Heart left ventricle (tissue), 16 donors: ENCODE measurements at regions of chr11 and their contacts with region 1.

Region 1: DNA sequence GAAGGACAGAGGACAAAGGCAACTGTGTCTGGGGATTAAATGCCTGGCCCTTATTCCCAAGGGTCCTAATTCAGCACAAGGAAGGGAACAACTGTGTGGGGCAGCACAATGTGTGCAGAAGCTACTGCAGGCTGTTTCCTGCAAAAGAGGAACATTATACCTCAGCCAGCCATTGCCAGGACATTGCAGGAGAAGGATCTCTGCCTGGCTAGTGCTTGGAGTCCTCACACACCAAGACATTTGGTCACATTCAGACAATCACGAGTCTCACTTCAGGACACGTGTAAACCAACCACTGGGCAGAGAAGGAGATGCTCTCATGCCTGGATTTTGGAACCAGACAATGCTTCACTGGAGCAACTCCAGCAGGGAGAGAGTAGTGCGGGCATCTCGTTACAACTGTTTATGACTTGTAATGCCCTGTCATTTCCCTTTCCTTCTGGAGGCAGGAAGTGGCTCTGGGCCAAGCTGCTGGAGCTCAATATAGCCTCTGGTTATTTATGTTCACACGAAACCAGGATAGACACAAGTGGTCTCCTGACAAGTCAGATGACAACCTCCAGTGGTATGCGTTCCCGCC is 23.9 kb upstream of the ZC3H12C start:
- DNase-seq: peak; percentile 65 to 81 (median 77)
- ATAC-seq: peak; percentile 78 to 92 (median 88)
- H3K4me3 ChIP-seq: peak overlapping the region in 3 of 12 donors; percentile 12 to 15 (median 13)
- H3K27ac ChIP-seq: peak overlapping the region in 9 of 12 donors; percentile 9 to 71 (median 49)
- H3K4me1 ChIP-seq: peaks cover 0 to 26% (median 16%) of the 10 kb centered on the region in 12 donors
- H3K27me3 ChIP-seq: no peaks in the 10 kb centered on the region
- CTCF ChIP-seq: no peak
- POLR2A ChIP-seq: no peak

Region 2: GRCh38 chr11:109208121-109208520 is 861.1 kb before region 1 on chr11:
- intact Hi-C with region 1: no loop called
- DNase-seq: no peak
- ATAC-seq: no peak
- H3K4me3 ChIP-seq: no peak overlapping the region
- H3K27ac ChIP-seq: no peak overlapping the region
- H3K4me1 ChIP-seq: no peaks in the 10 kb centered on the region
- H3K27me3 ChIP-seq: no peaks in the 10 kb centered on the region
- CTCF ChIP-seq: no peak
- POLR2A ChIP-seq: no peak

Region 3: GRCh38 chr11:109658190-109658589 is 411.1 kb before region 1 on chr11:
- intact Hi-C with region 1: no loop called
- DNase-seq: no peak
- ATAC-seq: peak; percentile 42 to 73 (median 46)
- H3K4me3 ChIP-seq: no peak overlapping the region
- H3K27ac ChIP-seq: no peak overlapping the region
- H3K4me1 ChIP-seq: no peaks in the 10 kb centered on the region
- H3K27me3 ChIP-seq: no peaks in the 10 kb centered on the region
- CTCF ChIP-seq: no peak
- POLR2A ChIP-seq: no peak

Region 4: DNA sequence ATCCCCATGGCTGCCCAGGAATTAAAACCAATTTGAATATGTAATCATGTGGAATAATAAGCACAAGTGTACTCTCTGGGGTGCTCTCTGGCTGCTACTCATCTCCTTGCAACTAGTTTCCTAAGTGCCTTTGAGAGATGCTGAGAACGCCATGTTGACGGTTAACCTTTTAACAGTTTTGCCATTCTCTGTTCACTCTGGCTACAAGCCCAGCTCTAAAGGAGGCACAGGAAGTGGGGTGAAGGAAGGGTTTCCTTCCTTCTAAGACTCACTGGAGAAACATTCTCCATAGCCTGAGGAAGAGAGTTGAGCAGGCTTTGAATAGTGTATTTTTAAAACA is 98.1 kb before region 1 on chr11:
- intact Hi-C with region 1: loop called in 1 of 10 experiments (anchors 10 kb)
- DNase-seq: peak in 2 of 5 donors; percentile 16 to 26
- ATAC-seq: peak in 3 of 4 donors; percentile 68 to 79 (median 78)
- H3K4me3 ChIP-seq: no peak overlapping the region
- H3K27ac ChIP-seq: peak overlapping the region in 1 of 12 donors; percentile 2
- H3K4me1 ChIP-seq: peaks cover 3 to 35% (median 19%) of the 10 kb centered on the region in 12 donors
- H3K27me3 ChIP-seq: no peaks in the 10 kb centered on the region
- CTCF ChIP-seq: no peak
- POLR2A ChIP-seq: no peak

Region 5: GRCh38 chr11:110429731-110430266 is 360.6 kb after region 1 on chr11 and contains the start of gene FDX1:
- intact Hi-C with region 1: no loop called
- DNase-seq: peak; percentile 79 to 91 (median 90)
- ATAC-seq: peak; percentile 86 to 97 (median 95)
- H3K4me3 ChIP-seq: peak within 1 kb of the TSS; percentile 73 to 94 (median 84)
- H3K27ac ChIP-seq: peak within 1 kb of the TSS; percentile 74 to 97 (median 91)
- H3K4me1 ChIP-seq: peaks cover 0 to 39% (median 31%) of the 10 kb centered on the region in 12 donors
- H3K27me3 ChIP-seq: no peaks in the 10 kb centered on the region
- CTCF ChIP-seq: peak; percentile 32 to 89 (median 70)
- POLR2A ChIP-seq: peak in 1 of 2 donors; percentile 76
- total RNA-seq, gene FDX1: 15.2 to 28.5 (median 22.5) TPM